Activated CD4-positive, alpha-beta memory T cell treated with anti-CD3 and anti-CD28 coated beads for 36 hours (primary cell): ENCODE measurements at regions of chr11 and their contacts with region 1.

Region 1: GRCh38 chr11:13861411-13861810 is 101.1 kb upstream of the SPON1 start:
- DNase-seq: no peak
- H3K4me3 Mint-ChIP-seq: no peak overlapping the region
- H3K27ac Mint-ChIP-seq: no peak overlapping the region
- H3K4me1 Mint-ChIP-seq: peaks cover 36% of the 10 kb centered on the region
- H3K27me3 Mint-ChIP-seq: no peaks in the 10 kb centered on the region

Region 2: DNA sequence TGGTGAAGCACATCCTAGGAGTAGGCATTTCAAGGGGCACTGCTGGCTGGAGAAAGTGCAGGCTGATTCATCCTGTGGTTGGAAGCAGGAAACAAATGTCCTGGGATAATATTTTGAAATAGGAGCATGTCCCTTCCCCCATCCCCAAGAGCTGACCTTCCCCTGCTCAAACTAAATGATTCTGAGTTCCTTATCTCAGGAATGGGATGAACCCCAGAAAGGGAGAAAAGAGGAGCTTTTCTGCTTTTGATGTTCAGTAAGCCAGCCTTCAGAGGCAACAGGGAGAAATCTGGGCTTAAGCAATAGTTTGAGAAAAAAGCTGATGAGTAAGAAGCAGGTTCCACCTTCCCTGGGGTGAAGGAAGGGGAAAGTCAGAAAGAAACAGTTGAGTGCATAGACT is 81.6 kb after region 1 on chr11:
- CTCF ChIA-PET with region 1: no interaction called
- POLR2A ChIA-PET with region 1: no interaction called
- intact Hi-C with region 1: loop called (anchors 5 kb)
- DNase-seq: no peak
- H3K4me3 Mint-ChIP-seq: no peak overlapping the region
- H3K27ac Mint-ChIP-seq: no peak overlapping the region
- H3K4me1 Mint-ChIP-seq: peaks cover 46% of the 10 kb centered on the region
- H3K27me3 Mint-ChIP-seq: no peaks in the 10 kb centered on the region

Region 3: DNA sequence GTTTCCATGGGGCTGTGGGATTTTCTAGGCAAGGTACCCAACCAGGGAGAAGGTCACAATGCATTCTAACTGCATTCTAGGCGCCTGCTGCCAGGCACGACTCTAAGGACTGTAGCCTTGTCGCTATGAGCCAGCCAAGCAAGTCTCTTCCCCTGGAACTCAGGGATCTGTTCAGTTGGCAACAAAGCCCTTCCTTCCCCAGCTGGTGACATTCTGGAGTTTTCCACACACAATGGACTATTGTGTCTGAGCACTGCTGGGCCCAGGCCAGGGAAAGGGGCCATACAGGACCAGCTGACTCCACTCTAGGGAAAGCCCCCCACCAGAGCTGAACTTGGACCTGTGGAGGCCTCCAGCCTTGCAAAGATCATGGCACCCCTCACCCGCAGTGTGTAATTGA is 380.8 kb after region 1 on chr11:
- CTCF ChIA-PET with region 1: no interaction called
- POLR2A ChIA-PET with region 1: no interaction called
- intact Hi-C with region 1: no loop called
- DNase-seq: no peak
- H3K4me3 Mint-ChIP-seq: no peak overlapping the region
- H3K27ac Mint-ChIP-seq: no peak overlapping the region
- H3K4me1 Mint-ChIP-seq: peaks cover 2% of the 10 kb centered on the region
- H3K27me3 Mint-ChIP-seq: no peaks in the 10 kb centered on the region